Tibial artery (tissue), 4 donors: ENCODE measurements at regions of chr3 and their contacts with region 1.

Region 1: GRCh38 chr3:170180908-170181879 is at the start of gene PHC3:
- DNase-seq: peak; percentile 94 to 96
- H3K4me3 ChIP-seq: peak within 1 kb of the TSS; percentile 82 to 83
- H3K27ac ChIP-seq: peak within 1 kb of the TSS; percentile 96
- H3K4me1 ChIP-seq: peaks cover 0 to 40% (median 13%) of the 10 kb centered on the region in 4 donors
- H3K27me3 ChIP-seq: no peaks in the 10 kb centered on the region
- CTCF ChIP-seq: no peak

Region 2: GRCh38 chr3:170098753-170099152 is 82.4 kb before region 1 on chr3:
- intact Hi-C with region 1: no loop called
- DNase-seq: no peak
- H3K4me3 ChIP-seq: no peak overlapping the region
- H3K27ac ChIP-seq: no peak overlapping the region
- H3K4me1 ChIP-seq: no peaks in the 10 kb centered on the region
- H3K27me3 ChIP-seq: no peaks in the 10 kb centered on the region
- CTCF ChIP-seq: no peak

Region 3: GRCh38 chr3:170307671-170308403 is 126.6 kb after region 1 on chr3:
- intact Hi-C with region 1: no loop called
- DNase-seq: no peak
- H3K4me3 ChIP-seq: no peak overlapping the region
- H3K27ac ChIP-seq: no peak overlapping the region
- H3K4me1 ChIP-seq: peaks cover 0 to 4% (median 0%) of the 10 kb centered on the region in 4 donors
- H3K27me3 ChIP-seq: no peaks in the 10 kb centered on the region
- CTCF ChIP-seq: no peak

Region 4: GRCh38 chr3:170357176-170357919 is 176.2 kb after region 1 on chr3 and contains the start of gene SKIL:
- intact Hi-C with region 1: loop called (anchors 5 kb)
- DNase-seq: peak; percentile 99
- H3K4me3 ChIP-seq: peak within 1 kb of the TSS; percentile 94 to 98
- H3K27ac ChIP-seq: peak within 1 kb of the TSS; percentile 98 to 100
- H3K4me1 ChIP-seq: peaks cover 0 to 47% (median 27%) of the 10 kb centered on the region in 4 donors
- H3K27me3 ChIP-seq: no peaks in the 10 kb centered on the region
- CTCF ChIP-seq: peak; percentile 6 to 45